ENCODE measurements at regions of chr19 and their contacts with region 1.

Region 1: GRCh38 chr19:28883241-28883693 is 329.7 kb downstream of the UQCRFS1 start:
- DNase-seq: peak; percentile 78
- ATAC-seq: peak; percentile 92

Region 2: DNA sequence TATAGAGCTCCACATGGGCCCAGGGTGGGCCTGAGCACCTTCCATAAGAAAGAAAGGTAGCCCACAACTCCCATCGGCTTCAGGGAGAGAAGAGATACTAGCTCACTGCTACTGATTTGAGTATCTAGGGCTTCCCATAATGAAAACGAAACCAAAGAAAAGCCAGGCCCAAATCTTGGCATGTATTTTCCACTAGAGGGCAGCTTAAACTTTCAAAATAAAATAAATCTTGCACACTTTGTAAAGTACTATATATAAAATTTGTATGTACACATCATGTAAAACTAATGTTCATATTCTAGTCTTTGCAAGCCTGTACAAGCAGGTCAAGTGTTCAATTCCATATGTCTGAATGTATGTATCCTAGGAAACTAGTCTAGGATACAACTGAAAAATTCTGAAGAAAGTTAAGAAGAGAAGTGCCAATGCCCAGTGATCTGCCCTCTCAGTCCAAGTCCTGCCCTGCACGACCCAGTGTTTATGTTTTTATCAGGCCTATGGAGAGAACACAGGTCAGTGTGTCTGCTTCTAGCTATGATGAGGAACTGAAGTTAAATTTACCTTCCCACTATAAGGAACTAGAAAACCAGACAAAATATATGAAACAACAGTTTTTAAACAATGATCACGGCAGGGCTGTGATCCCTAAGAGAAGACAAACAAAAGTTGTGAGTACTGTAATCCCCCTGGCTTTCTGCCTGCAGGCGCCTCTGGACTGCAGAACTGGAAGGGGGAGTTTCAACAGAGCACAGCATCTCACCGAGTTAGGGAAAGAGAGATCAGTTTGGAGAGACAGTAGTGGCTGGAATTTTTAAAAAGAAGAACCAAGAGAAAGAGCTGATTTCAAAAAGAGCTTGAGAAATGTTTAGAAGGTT is 146.0 kb before region 1 on chr19:
- intact Hi-C with region 1: loop called (anchors 5 kb)
- DNase-seq: no peak
- ATAC-seq: peak; percentile 79

Region 3: DNA sequence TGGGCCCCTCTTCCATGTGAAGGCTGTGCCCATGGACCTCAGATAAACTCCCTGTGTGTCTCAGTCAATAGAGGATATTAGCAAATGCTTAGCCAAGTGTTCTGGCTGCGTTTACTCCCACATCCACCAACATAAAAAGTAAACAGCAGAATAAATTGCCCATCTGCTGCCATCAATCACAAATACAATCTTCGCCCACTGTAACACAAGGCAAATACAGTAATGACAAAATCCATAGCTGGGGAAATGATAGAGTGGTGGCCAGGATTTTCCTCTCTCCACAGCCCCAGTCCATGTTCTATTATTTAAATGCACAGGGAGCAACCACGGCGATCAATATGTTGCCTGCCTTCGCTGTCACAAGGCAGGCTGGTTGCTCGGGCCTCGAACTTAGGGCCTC is 46.8 kb before region 1 on chr19:
- intact Hi-C with region 1: no loop called
- DNase-seq: no peak
- ATAC-seq: no peak

Measured in sciatic nerve (tissue), 2 donors.